ENCODE measurements at regions of chr15 and their contacts with region 1.

Region 1: DNA sequence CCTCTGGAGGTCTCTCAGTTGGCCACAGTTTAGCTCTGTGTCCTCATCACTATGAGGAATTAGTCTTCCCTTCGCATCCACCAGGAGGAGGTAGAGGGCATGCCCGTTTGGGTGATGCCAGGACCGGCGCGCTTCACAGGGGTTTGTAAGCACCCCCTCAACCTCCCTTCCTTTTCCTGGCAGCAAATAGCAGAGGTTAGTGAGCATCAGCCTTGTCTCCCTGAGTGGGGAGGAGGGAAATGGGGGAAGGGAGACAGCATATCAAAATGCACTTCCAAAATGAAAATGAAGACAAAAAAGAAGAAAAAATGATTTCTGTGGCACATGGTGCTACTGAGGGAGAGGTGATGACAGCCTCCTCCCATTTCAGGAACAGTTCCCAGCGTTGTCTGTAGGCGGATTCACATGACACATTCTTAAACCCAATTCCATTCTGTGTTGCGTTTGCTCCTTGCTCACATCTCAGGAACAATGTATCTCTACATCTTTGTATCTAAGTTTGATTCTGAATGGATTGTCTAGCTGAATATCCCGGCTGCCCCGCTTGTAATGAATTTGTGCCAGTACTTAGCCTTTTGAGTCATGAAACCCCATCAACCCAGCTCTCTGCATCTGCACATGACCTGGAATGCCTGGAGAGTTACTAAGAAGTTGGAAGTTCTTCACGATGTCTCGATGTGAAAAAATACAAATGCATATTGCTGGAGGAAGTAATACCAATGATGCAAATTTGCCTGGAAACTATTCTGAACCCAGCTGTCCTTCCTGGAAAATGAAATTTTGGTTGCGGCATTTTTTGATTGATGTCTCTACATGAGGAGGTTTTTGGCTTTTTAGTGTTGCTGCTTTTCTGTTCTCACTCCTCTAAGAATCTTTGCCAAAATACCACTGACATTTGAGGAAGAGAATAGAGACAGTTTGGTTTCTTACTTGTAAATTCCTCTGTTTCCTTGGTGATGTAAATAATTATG is 45.2 kb downstream of the TYRO3 start:
- DNase-seq: peak; percentile 58 to 73 (median 66)
- ATAC-seq: peak; percentile 91
- H3K4me3 ChIP-seq: no peak overlapping the region
- H3K27ac ChIP-seq: no peak overlapping the region
- H3K4me1 ChIP-seq: peaks cover 5% of the 10 kb centered on the region
- H3K27me3 ChIP-seq: no peaks in the 10 kb centered on the region
- CTCF ChIP-seq: peak; percentile 53 to 80 (median 73)
- POLR2A ChIP-seq: no peak

Region 2: GRCh38 chr15:41493205-41493901 is 110.9 kb before region 1 on chr15 and contains the start of gene ITPKA:
- intact Hi-C with region 1: no loop called
- DNase-seq: peak; percentile 69 to 85 (median 81)
- ATAC-seq: peak; percentile 63
- H3K4me3 ChIP-seq: peak within 1 kb of the TSS; percentile 29 to 37
- H3K27ac ChIP-seq: peak within 1 kb of the TSS in 3 of 4 donors; percentile 39 to 60 (median 49)
- H3K4me1 ChIP-seq: peaks cover 39% of the 10 kb centered on the region
- H3K27me3 ChIP-seq: no peaks in the 10 kb centered on the region
- CTCF ChIP-seq: peak in 1 of 7 experiments; percentile 3
- POLR2A ChIP-seq: peak in 2 of 3 donors; percentile 21 to 27
- total RNA-seq, gene ITPKA: 0.33 to 0.52 TPM

Region 3: DNA sequence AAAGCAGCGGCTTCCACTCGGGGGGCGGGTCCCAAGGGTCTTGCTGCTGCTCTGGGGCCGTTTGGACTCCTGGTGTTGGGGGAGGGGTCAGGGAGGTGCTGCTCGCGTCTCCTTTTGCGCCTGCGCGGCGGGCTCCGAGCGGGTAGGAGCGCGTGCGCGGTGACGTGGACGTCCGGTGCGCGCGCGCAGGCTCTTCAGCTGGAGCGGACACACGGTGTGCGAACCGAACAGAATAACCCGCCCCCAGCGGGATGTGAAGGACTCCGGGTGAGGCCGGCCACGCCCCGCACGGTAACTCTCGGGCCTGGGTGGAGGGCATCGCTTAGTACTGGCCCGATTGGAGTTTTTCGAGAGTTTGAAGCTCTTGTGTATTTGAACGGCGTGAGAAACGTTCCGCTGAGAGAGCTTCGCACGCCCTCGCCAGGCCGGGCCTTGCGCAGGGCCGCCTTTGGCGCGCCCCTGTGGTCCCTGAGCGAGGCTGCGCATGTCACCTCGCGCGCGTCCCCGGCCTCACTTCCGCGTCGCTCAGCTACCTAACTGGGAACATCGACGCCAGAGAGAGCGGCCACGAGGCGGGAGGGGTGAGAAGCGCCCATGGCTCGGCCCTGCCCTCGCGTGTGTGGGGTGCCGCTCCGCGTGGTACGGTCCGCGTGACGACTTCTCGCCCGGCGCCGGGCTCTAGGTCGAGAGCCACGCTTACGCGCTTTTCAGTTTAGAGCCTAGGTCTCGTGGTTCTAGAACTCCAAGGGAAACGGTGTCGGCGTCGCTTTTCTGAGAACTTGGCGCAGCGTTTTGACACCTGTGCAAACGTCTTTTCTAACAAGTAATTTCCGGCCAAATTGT is 56.2 kb after region 1 on chr15 and contains the start of gene MGA:
- intact Hi-C with region 1: no loop called
- DNase-seq: peak; percentile 85 to 92 (median 90)
- ATAC-seq: peak; percentile 87
- H3K4me3 ChIP-seq: peak within 1 kb of the TSS; percentile 5 to 7
- H3K27ac ChIP-seq: peak within 1 kb of the TSS; percentile 18 to 87 (median 70)
- H3K4me1 ChIP-seq: peaks cover 26% of the 10 kb centered on the region
- H3K27me3 ChIP-seq: no peaks in the 10 kb centered on the region
- CTCF ChIP-seq: peak in 2 of 7 experiments; percentile 8
- POLR2A ChIP-seq: peak; percentile 23 to 59 (median 41)
- total RNA-seq, gene MGA: 28.8 to 45.5 TPM

Region 4: GRCh38 chr15:41806291-41807181 is 202.3 kb after region 1 on chr15:
- intact Hi-C with region 1: loop called (anchors 10 kb)
- DNase-seq: peak in 2 of 4 donors; percentile 37 to 40
- ATAC-seq: no peak
- H3K4me3 ChIP-seq: no peak overlapping the region
- H3K27ac ChIP-seq: no peak overlapping the region
- H3K4me1 ChIP-seq: no peaks in the 10 kb centered on the region
- H3K27me3 ChIP-seq: no peaks in the 10 kb centered on the region
- CTCF ChIP-seq: no peak
- POLR2A ChIP-seq: no peak

Measured in body of pancreas (tissue), 4 donors.